Activated B cell treated with CpG ODN at 0.5 μM for 24 hours (primary cell): ENCODE measurements at regions of chr1 and their contacts with region 1.

Region 1: DNA sequence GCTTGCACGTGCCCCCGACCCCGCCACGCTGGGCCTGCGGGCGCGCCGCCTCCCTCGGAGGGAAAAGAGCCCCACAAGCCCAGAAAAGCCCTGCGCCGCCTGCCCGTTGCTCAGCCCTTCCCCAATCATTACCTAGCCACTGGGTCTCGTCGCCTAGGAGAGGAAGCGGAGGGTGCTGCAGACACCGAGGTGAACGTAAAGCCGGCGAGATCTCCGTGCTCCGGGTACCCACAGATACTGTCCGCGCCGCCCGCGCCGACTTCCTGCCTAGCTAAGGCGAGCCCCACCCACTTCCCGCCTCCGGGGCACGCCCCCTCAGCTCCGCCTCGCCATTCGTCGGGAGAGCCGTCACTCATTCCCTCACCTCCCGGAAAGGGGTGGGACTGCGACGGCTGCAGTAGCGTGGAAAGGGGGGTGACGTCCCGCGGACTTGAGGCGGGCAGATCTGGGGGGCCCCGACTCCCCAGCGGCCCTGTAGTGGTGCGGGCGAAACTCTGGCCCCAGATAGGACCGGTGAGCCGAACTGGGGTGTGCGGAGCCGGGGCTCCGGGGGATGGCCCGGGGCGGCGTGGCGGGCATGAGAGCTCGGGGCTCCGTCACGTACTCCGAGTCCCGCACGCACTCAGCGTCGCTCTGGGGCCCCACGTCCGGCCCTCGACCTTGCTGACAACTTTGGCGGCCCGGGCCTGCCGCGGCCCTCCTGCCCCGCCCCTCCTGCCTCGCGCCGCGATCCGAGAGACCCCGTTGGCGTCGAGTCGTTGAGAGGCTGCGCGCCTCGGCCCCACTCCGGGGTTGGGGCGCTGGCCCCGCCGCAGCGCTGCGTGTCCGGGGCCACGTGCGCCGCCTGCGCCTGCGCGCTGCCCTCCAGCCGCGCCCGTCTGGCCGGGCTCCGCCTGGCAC is at the start of gene ENO1:
- DNase-seq: peak; percentile 100
- ATAC-seq: peak; percentile 79
- H3K4me3 Mint-ChIP-seq: peak within 1 kb of the TSS; percentile 95
- H3K27ac Mint-ChIP-seq: peak within 1 kb of the TSS; percentile 96
- H3K4me1 Mint-ChIP-seq: peaks cover 45% of the 10 kb centered on the region
- H3K27me3 Mint-ChIP-seq: no peaks in the 10 kb centered on the region
- CTCF ChIP-seq: no peak
- total RNA-seq, gene ENO1: 837 and 886 TPM in 2 replicates

Region 2: GRCh38 chr1:7783826-7784491 is 1094.7 kb before region 1 on chr1 and contains the start of gene PER3:
- CTCF ChIA-PET with region 1: no interaction called
- POLR2A ChIA-PET with region 1: no interaction called
- intact Hi-C with region 1: loop called (anchors 10 kb)
- DNase-seq: peak; percentile 95
- ATAC-seq: peak; percentile 92
- H3K4me3 Mint-ChIP-seq: peak within 1 kb of the TSS; percentile 80
- H3K27ac Mint-ChIP-seq: no peak within 1 kb of the TSS
- H3K4me1 Mint-ChIP-seq: peaks cover 26% of the 10 kb centered on the region
- H3K27me3 Mint-ChIP-seq: no peaks in the 10 kb centered on the region
- CTCF ChIP-seq: no peak
- total RNA-seq, gene PER3: 2.7 and 3.3 TPM in 2 replicates

Region 3: DNA sequence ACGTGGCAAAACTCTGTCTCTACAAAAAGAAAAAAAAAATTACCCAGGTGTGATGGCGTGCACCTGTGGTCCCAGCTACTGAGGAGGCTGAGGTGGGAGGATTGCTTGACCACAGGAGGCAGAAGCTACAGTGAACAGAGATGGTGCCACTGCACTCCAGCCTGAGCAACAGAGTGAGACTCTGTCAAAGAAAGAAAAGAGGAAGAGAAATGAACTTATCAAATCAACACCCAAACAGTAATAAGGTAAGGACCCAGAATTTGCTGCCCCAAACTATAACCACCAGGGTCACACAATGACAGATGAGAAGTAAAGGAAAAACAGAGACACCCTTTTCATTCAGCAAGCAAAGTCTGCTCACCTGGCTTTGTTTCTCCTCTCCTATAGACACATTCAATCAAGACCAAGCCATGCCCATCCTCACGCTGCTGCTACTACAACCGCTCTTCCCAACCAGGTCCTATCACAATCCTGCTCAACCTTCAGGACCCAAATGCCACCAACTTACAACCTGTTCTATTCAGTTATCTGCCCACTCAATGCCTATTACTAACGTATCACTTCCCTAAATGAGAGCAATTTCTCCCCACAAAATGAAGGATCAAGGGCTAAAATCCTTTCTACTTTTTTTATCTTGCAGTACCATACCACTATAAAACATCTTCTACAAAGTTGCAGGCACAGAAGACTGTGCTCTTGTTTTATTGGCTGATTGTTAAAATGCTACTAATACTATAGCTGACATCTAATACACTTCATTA is 244.8 kb before region 1 on chr1:
- CTCF ChIA-PET with region 1: no interaction called
- POLR2A ChIA-PET with region 1: no interaction called
- intact Hi-C with region 1: no loop called
- DNase-seq: no peak
- ATAC-seq: no peak
- H3K4me3 Mint-ChIP-seq: no peak overlapping the region
- H3K27ac Mint-ChIP-seq: peak overlapping the region; percentile 15
- H3K4me1 Mint-ChIP-seq: peaks cover 58% of the 10 kb centered on the region
- H3K27me3 Mint-ChIP-seq: no peaks in the 10 kb centered on the region
- CTCF ChIP-seq: no peak

Region 4: GRCh38 chr1:8817406-8818324 is 61.0 kb before region 1 on chr1 and contains the start of gene RERE:
- CTCF ChIA-PET with region 1: no interaction called
- POLR2A ChIA-PET with region 1: interaction called, 33 read pairs
- intact Hi-C with region 1: loop called (anchors 5 kb)
- DNase-seq: peak; percentile 99
- ATAC-seq: peak; percentile 93
- H3K4me3 Mint-ChIP-seq: peak within 1 kb of the TSS; percentile 94
- H3K27ac Mint-ChIP-seq: peak within 1 kb of the TSS; percentile 96
- H3K4me1 Mint-ChIP-seq: peaks cover 42% of the 10 kb centered on the region
- H3K27me3 Mint-ChIP-seq: no peaks in the 10 kb centered on the region
- CTCF ChIP-seq: no peak
- total RNA-seq, gene RERE: 90.5 and 98.8 TPM in 2 replicates

Region 5: GRCh38 chr1:8866792-8867415 is 11.8 kb before region 1 on chr1:
- CTCF ChIA-PET with region 1: interaction called, 5 read pairs
- POLR2A ChIA-PET with region 1: interaction called, 26 read pairs
- intact Hi-C with region 1: no loop called
- DNase-seq: no peak
- ATAC-seq: no peak
- H3K4me3 Mint-ChIP-seq: no peak overlapping the region
- H3K27ac Mint-ChIP-seq: no peak overlapping the region
- H3K4me1 Mint-ChIP-seq: peaks cover 19% of the 10 kb centered on the region
- H3K27me3 Mint-ChIP-seq: no peaks in the 10 kb centered on the region
- CTCF ChIP-seq: no peak

Region 6: DNA sequence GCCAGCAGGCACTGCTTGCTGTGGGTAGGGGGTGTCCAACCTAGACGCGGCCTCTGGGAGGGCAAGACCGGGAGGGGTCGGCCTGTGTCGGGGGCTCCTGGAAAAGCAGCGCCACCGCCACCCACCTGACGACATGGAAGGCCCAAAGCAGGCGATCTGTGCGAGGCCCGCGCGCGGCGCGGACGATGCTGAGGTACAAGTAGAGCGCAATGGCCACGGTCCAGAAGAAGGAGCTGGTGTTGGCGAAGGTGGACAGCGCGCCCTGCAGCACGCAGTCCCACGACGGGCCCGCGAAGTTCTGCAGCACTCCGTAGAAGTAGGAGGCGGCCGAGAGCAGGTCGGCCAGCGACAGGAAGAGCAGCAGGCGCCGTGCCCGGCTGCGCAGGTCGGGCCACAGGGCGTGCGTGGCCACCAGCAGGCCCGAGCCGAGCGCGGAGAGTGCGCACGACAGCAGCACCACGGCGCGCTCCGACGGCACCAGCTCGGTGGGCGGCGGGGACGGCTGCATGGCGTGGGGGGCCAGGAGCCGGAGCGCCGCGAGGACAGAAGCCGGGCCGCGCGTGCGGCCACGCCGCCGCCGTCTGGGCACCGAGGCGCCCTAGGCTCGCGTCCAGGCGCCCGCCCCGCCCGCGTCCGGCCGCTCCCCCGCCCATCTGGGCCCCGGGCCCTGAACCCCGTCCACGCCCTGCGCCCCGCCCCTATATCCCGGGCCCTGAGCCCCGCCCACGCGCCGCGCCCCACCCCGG is 250.0 kb after region 1 on chr1 and contains the start of gene GPR157:
- CTCF ChIA-PET with region 1: no interaction called
- POLR2A ChIA-PET with region 1: interaction called, 12 read pairs
- intact Hi-C with region 1: no loop called
- DNase-seq: peak; percentile 75
- ATAC-seq: peak; percentile 87
- H3K4me3 Mint-ChIP-seq: peak within 1 kb of the TSS; percentile 90
- H3K27ac Mint-ChIP-seq: peak within 1 kb of the TSS; percentile 56
- H3K4me1 Mint-ChIP-seq: peaks cover 49% of the 10 kb centered on the region
- H3K27me3 Mint-ChIP-seq: no peaks in the 10 kb centered on the region
- CTCF ChIP-seq: no peak
- total RNA-seq, gene GPR157: 6.2 and 7.0 TPM in 2 replicates